MCF 10A (cell line): ENCODE measurements at regions of chr10 and their contacts with region 1.

Region 1: GRCh38 chr10:118046395-118047156 is at the start of gene RAB11FIP2:
- DNase-seq: peak; percentile 91
- H3K4me3 Mint-ChIP-seq: peak within 1 kb of the TSS; percentile 82
- H3K27ac Mint-ChIP-seq: peak within 1 kb of the TSS; percentile 87
- H3K4me1 Mint-ChIP-seq: peaks cover 24% of the 10 kb centered on the region
- H3K27me3 Mint-ChIP-seq: no peaks in the 10 kb centered on the region
- CTCF ChIP-seq: no peak
- total RNA-seq, gene RAB11FIP2: 23.9 and 27.1 TPM in 2 replicates

Region 2: GRCh38 chr10:117677890-117678500 is 368.6 kb before region 1 on chr10:
- CTCF ChIA-PET with region 1: no interaction called
- POLR2A ChIA-PET with region 1: interaction called, 4 read pairs
- intact Hi-C with region 1: loop called (anchors 10 kb)
- DNase-seq: peak; percentile 48
- H3K4me3 Mint-ChIP-seq: no peak overlapping the region
- H3K27ac Mint-ChIP-seq: no peak overlapping the region
- H3K4me1 Mint-ChIP-seq: peaks cover 27% of the 10 kb centered on the region
- H3K27me3 Mint-ChIP-seq: no peaks in the 10 kb centered on the region
- CTCF ChIP-seq: no peak

Region 3: GRCh38 chr10:117762819-117763172 is 283.8 kb before region 1 on chr10:
- CTCF ChIA-PET with region 1: interaction called, 3 read pairs
- POLR2A ChIA-PET with region 1: no interaction called
- intact Hi-C with region 1: loop called (anchors 10 kb)
- DNase-seq: peak; percentile 89
- H3K4me3 Mint-ChIP-seq: no peak overlapping the region
- H3K27ac Mint-ChIP-seq: peak overlapping the region; percentile 85
- H3K4me1 Mint-ChIP-seq: peaks cover 22% of the 10 kb centered on the region
- H3K27me3 Mint-ChIP-seq: no peaks in the 10 kb centered on the region
- CTCF ChIP-seq: no peak

Region 4: DNA sequence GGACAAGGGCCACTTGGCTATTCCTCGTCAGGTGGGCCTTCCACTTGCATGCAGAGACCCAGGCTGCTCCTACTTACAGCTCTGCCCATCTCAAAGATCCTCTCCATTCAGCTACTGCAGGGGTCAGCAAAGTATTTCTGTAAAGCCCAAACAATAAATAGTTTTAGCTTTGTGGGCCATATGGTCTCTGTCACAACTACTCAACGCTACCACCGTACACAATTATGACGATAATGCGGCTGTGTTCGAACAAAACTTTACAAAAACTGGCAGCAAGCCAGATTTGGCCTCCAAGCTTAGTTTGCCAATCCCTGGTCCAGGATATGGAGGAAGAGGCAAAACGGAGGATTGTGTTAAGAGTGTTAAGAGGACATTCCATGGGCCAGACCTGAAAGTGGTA is 12.7 kb before region 1 on chr10:
- CTCF ChIA-PET with region 1: no interaction called
- POLR2A ChIA-PET with region 1: interaction called, 10 read pairs
- intact Hi-C with region 1: no loop called
- DNase-seq: no peak
- H3K4me3 Mint-ChIP-seq: no peak overlapping the region
- H3K27ac Mint-ChIP-seq: no peak overlapping the region
- H3K4me1 Mint-ChIP-seq: peaks cover 15% of the 10 kb centered on the region
- H3K27me3 Mint-ChIP-seq: no peaks in the 10 kb centered on the region
- CTCF ChIP-seq: no peak